ENCODE measurements at regions of chr22 and their contacts with region 1.

Region 1: DNA sequence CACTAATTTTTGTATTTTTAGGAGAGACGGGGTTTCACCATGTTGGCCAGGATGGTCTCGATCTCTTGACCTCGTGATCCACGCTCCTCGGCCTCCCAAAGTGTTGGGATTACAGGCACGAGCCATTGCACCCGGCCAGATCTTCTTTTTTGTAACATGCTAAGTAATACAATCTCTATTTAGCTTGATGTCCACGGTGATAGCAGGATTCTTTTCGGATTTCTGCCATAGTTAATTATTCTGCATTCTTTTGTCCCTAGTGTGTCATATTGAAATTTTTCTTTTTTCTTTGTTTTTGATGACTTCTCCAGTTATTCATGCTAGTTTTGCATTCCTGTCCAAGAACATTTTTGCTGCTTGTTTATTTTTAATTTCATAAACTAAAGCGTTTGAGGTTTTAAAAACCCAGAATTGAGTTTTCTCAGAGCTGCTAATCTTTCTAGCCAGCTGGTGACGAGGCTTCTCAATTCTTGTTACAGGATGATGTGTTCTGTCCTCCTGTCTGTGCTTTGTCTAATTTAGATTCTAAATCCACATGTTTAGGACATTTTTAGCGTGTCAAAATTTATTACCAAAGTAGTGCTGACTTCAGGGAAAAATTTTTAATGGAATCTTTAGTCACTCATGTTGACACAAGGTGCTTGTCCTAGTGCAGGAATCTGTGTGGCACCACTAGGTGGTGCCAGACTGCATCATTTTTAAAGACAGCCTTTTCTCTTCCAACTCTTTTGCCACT is 21.8 kb downstream of the NF2 start:
- DNase-seq: no peak
- ATAC-seq: 0 out of 2 replicates have a peak, but pooled peaks have one; percentile 24
- H3K4me3 ChIP-seq: no peak overlapping the region
- H3K27ac ChIP-seq: no peak overlapping the region
- H3K4me1 ChIP-seq: peaks cover 57 to 75% of the 10 kb centered on the region in 2 experiments
- H3K27me3 ChIP-seq: no peaks in the 10 kb centered on the region
- CTCF ChIP-seq: peak; percentile 53 to 93 (median 89); a peak in 5 of 6 replicates
- POLR2A ChIP-seq: no peak
- RAD21 ChIP-seq: peak; percentile 59

Region 2: DNA sequence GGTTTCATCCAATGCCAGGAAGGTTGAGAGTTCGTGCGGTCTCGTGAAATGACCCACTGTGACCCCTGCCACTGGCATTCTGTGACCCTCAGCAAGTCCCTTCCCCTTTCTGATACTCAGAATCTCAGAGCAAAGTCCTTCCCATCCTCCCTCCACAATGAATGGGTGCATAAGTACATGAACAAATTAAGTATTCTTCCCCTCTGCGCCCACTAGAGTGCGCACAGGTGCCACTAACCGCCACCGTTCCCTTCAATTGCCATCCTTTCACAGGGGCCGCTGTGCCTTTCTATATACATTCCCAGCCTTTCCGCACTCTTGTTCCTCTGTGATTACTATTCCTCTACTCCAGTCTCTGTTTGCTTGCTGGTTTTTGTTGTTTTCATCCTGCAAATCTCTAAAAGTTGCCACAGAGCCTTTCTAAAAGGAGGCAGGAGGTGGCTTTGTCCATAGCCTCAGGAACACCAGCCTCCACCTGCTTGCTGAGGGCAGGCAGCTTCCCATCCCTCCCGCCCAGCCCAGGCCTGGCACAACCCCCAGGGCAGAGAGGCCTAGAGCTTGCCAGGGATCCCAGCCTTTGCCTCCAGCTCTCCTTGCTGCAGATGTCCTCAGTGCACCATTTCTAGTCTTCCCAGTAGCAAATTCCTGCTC is 230.2 kb before region 1 on chr22:
- CTCF ChIA-PET with region 1: no interaction called
- POLR2A ChIA-PET with region 1: no interaction called
- RAD21 ChIA-PET with region 1: no interaction called
- intact Hi-C with region 1: loop called (anchors 10 kb)
- DNase-seq: peak; percentile 48
- ATAC-seq: peak; percentile 98
- H3K4me3 ChIP-seq: no peak overlapping the region
- H3K27ac ChIP-seq: no peak overlapping the region
- H3K4me1 ChIP-seq: peaks cover 8 to 20% of the 10 kb centered on the region in 2 experiments
- H3K27me3 ChIP-seq: no peaks in the 10 kb centered on the region
- CTCF ChIP-seq: peak; percentile 79 to 91 (median 90)
- POLR2A ChIP-seq: no peak
- RAD21 ChIP-seq: peak; percentile 89

Region 3: DNA sequence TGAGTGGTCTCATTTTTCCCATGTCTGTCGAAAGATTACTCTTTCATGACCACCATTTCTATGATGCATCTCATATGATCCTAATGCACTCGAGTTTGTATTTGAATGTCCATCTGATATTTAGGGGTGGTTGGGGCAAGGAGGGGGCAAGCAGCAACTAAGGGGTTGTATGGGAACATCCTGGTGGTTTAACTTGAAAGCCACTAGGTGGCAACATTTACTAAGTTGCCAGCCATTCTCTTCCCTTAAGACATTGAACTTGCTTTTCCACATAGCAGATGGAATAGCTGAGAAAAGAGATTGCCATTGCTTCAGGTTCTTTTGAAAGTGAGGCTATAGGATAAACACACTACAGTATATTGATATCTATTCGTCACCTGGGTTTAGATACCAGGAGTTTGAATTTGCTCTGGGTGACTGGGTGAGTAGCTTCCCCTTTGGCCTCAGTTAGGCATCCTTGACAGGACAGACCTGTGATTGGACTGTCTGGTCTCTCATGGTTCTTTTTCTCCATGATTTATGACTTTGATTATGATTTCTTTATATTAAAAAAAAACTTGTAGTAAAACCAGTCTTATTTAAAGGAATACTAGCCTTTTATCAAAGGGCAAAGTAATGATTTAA is 10.6 kb after region 1 on chr22:
- CTCF ChIA-PET with region 1: interaction called, 20 read pairs
- POLR2A ChIA-PET with region 1: no interaction called
- RAD21 ChIA-PET with region 1: no interaction called
- intact Hi-C with region 1: no loop called
- DNase-seq: peak; percentile 34
- ATAC-seq: peak; percentile 93
- H3K4me3 ChIP-seq: no peak overlapping the region
- H3K27ac ChIP-seq: no peak overlapping the region
- H3K4me1 ChIP-seq: peaks cover 0 to 3% of the 10 kb centered on the region in 2 experiments; a peak in 1 of 4 replicates
- H3K27me3 ChIP-seq: no peaks in the 10 kb centered on the region
- CTCF ChIP-seq: peak; percentile 73
- POLR2A ChIP-seq: no peak
- RAD21 ChIP-seq: peak; percentile 78